CD4-positive, alpha-beta memory T cell (primary cell): ENCODE measurements at regions of chr18 and their contacts with region 1.

Region 1: GRCh38 chr18:3245853-3246634 is 1.6 kb upstream of the MYL12A start:
- DNase-seq: peak; percentile 70 to 81 (median 73)
- H3K4me3 ChIP-seq: peak overlapping the region; percentile 76 to 86
- H3K4me3 Mint-ChIP-seq: peak overlapping the region; percentile 93 to 98 (median 96)
- H3K27ac ChIP-seq: peak overlapping the region; percentile 85
- H3K27ac Mint-ChIP-seq: peak overlapping the region; percentile 80 to 99 (median 96)
- H3K4me1 ChIP-seq: peaks cover 32% of the 10 kb centered on the region
- H3K4me1 Mint-ChIP-seq: peaks cover 19 to 52% (median 30%) of the 10 kb centered on the region in 4 donors
- H3K27me3 ChIP-seq: no peaks in the 10 kb centered on the region
- H3K27me3 Mint-ChIP-seq: no peaks in the 10 kb centered on the region

Region 2: DNA sequence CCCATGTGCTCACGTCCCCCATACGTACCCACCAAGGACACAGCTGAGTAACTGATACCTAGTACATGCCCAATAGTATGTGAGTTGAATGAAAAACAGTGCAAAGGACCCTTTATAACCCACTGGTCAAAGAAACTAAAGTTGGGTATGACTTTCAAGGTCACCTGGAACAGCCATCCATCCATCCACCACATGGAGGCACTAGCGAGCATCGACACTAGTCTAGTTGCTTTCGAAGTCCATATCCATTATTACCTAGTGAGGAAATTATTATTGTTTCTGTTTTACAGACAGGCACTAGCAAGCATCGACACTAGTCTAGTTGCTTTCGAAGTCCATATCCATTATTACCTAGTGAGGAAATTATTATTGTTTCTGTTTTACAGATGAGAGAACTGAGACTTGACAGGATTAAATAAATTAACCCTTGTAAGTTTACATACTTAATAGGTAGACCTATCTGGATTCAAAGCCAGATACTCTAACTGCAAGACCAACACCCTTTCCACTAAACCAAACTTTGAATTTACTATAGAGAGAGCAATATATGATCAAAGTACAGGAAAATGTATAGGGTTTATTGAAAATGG is 908.4 kb before region 1 on chr18:
- CTCF ChIA-PET with region 1: no interaction called
- POLR2A ChIA-PET with region 1: no interaction called
- intact Hi-C with region 1: loop called (anchors 5 kb)
- DNase-seq: peak; percentile 18 to 46 (median 36)
- H3K4me3 ChIP-seq: no peak overlapping the region
- H3K4me3 Mint-ChIP-seq: no peak overlapping the region
- H3K27ac ChIP-seq: no peak overlapping the region
- H3K27ac Mint-ChIP-seq: no peak overlapping the region
- H3K4me1 ChIP-seq: no peaks in the 10 kb centered on the region
- H3K4me1 Mint-ChIP-seq: no peaks in the 10 kb centered on the region
- H3K27me3 ChIP-seq: no peaks in the 10 kb centered on the region
- H3K27me3 Mint-ChIP-seq: peaks cover 11 to 26% of the 10 kb centered on the region in 2 donors

Region 3: GRCh38 chr18:2932247-2933181 is 313.5 kb before region 1 on chr18:
- CTCF ChIA-PET with region 1: interaction called, 14 read pairs
- POLR2A ChIA-PET with region 1: interaction called, 7 read pairs
- intact Hi-C with region 1: loop called (anchors 1 kb)
- DNase-seq: peak; percentile 59 to 79 (median 73)
- H3K4me3 ChIP-seq: no peak overlapping the region
- H3K4me3 Mint-ChIP-seq: peak overlapping the region in 6 of 8 donors; percentile 18 to 64 (median 44)
- H3K27ac ChIP-seq: peak overlapping the region; percentile 56
- H3K27ac Mint-ChIP-seq: peak overlapping the region; percentile 83 to 94 (median 89)
- H3K4me1 ChIP-seq: peaks cover 36% of the 10 kb centered on the region
- H3K4me1 Mint-ChIP-seq: peaks cover 29 to 43% (median 37%) of the 10 kb centered on the region in 4 donors
- H3K27me3 ChIP-seq: no peaks in the 10 kb centered on the region
- H3K27me3 Mint-ChIP-seq: no peaks in the 10 kb centered on the region

Region 4: GRCh38 chr18:2985628-2986027 is 260.4 kb before region 1 on chr18:
- CTCF ChIA-PET with region 1: interaction called, 34 read pairs
- POLR2A ChIA-PET with region 1: interaction called, 20 read pairs
- intact Hi-C with region 1: no loop called
- DNase-seq: peak; percentile 47 to 71 (median 69)
- H3K4me3 ChIP-seq: no peak overlapping the region
- H3K4me3 Mint-ChIP-seq: peak overlapping the region in 1 of 8 donors; percentile 44
- H3K27ac ChIP-seq: no peak overlapping the region
- H3K27ac Mint-ChIP-seq: peak overlapping the region in 4 of 7 donors; percentile 15 to 90 (median 39)
- H3K4me1 ChIP-seq: peaks cover 51% of the 10 kb centered on the region
- H3K4me1 Mint-ChIP-seq: peaks cover 34 to 78% (median 50%) of the 10 kb centered on the region in 4 donors
- H3K27me3 ChIP-seq: no peaks in the 10 kb centered on the region
- H3K27me3 Mint-ChIP-seq: no peaks in the 10 kb centered on the region

Region 5: GRCh38 chr18:3062798-3063680 is 183.0 kb before region 1 on chr18:
- CTCF ChIA-PET with region 1: interaction called, 41 read pairs
- POLR2A ChIA-PET with region 1: interaction called, 114 read pairs
- intact Hi-C with region 1: loop called (anchors 1 kb)
- DNase-seq: peak; percentile 63 to 78 (median 66)
- H3K4me3 ChIP-seq: peak overlapping the region in 1 of 2 donors; percentile 53
- H3K4me3 Mint-ChIP-seq: peak overlapping the region; percentile 70 to 86 (median 81)
- H3K27ac ChIP-seq: peak overlapping the region; percentile 93
- H3K27ac Mint-ChIP-seq: peak overlapping the region; percentile 91 to 100 (median 98)
- H3K4me1 ChIP-seq: peaks cover 67% of the 10 kb centered on the region
- H3K4me1 Mint-ChIP-seq: peaks cover 52 to 72% (median 64%) of the 10 kb centered on the region in 4 donors
- H3K27me3 ChIP-seq: no peaks in the 10 kb centered on the region
- H3K27me3 Mint-ChIP-seq: no peaks in the 10 kb centered on the region

Region 6: GRCh38 chr18:3273042-3273441 is 27.0 kb after region 1 on chr18:
- CTCF ChIA-PET with region 1: no interaction called
- POLR2A ChIA-PET with region 1: interaction called, 13 read pairs
- intact Hi-C with region 1: no loop called
- DNase-seq: no peak
- H3K4me3 ChIP-seq: no peak overlapping the region
- H3K4me3 Mint-ChIP-seq: no peak overlapping the region
- H3K27ac ChIP-seq: no peak overlapping the region
- H3K27ac Mint-ChIP-seq: peak overlapping the region; percentile 32 to 93 (median 72)
- H3K4me1 ChIP-seq: peaks cover 44% of the 10 kb centered on the region
- H3K4me1 Mint-ChIP-seq: peaks cover 37 to 49% (median 45%) of the 10 kb centered on the region in 4 donors
- H3K27me3 ChIP-seq: no peaks in the 10 kb centered on the region
- H3K27me3 Mint-ChIP-seq: no peaks in the 10 kb centered on the region

Region 7: DNA sequence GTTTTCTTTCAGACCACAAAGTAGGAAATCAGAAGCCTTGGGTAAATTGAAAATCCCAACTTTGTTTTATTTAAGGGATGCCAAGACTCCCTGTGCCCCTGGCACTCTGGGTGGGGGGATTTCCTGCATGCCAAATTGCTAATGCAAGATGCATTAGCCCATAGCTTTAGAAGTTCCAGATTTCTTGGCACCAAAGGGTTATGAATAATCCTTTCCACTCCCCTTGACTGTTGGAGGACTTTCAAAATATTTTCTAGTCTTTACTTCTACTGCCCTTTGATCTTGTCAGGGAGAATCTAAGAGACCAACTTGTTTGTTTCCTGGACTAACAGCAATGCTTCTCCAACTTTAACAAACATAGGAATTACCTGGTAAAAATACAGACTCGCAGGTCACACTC is 122.1 kb after region 1 on chr18:
- CTCF ChIA-PET with region 1: no interaction called
- POLR2A ChIA-PET with region 1: no interaction called
- intact Hi-C with region 1: no loop called
- DNase-seq: no peak
- H3K4me3 ChIP-seq: no peak overlapping the region
- H3K4me3 Mint-ChIP-seq: no peak overlapping the region
- H3K27ac ChIP-seq: no peak overlapping the region
- H3K27ac Mint-ChIP-seq: no peak overlapping the region
- H3K4me1 ChIP-seq: no peaks in the 10 kb centered on the region
- H3K4me1 Mint-ChIP-seq: no peaks in the 10 kb centered on the region
- H3K27me3 ChIP-seq: no peaks in the 10 kb centered on the region
- H3K27me3 Mint-ChIP-seq: peaks cover 4 to 9% of the 10 kb centered on the region in 2 donors

Region 8: DNA sequence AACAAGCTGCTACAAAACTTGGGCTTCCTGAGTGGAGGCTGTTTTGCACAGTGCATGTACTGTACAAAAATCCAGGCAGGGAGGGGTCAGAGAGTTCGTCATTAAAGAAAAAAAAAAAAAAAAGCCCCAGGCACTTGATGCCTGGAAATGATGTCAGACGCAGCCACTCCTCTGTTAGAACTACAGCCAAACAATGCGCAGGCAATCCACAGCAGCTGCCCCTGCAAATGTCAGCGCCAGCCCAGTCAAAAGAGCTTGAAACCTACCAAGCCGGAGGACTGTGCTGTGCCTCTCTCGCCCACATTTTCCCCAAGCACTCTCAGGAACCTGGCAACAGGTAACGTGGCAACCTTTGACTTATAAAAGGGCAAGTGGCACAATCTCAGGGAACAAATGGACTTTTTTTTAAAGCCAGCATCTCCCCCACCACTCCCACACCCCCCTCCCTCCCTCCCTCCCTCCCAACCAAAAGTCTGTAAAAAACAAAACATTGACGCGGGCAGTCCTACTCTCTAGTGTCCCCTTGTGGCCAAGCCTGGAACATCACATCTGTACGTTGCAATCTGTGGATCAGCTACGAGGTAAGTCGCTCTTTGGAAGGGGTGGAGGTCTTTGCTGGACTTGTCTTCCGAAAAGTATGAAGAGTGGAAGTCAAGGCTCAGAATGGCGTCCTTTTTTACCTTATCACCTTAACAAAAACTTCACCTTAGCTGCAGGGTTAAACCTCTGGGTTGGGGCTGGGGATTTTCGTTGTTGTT is 348.0 kb after region 1 on chr18:
- CTCF ChIA-PET with region 1: interaction called, 10 read pairs
- POLR2A ChIA-PET with region 1: interaction called, 59 read pairs
- intact Hi-C with region 1: loop called (anchors 1 kb)
- DNase-seq: peak; percentile 93 to 96 (median 95)
- H3K4me3 ChIP-seq: peak overlapping the region; percentile 68 to 72
- H3K4me3 Mint-ChIP-seq: peak overlapping the region; percentile 88 to 95 (median 91)
- H3K27ac ChIP-seq: peak overlapping the region; percentile 91
- H3K27ac Mint-ChIP-seq: peak overlapping the region; percentile 98 to 100 (median 99)
- H3K4me1 ChIP-seq: peaks cover 53% of the 10 kb centered on the region
- H3K4me1 Mint-ChIP-seq: peaks cover 37 to 66% (median 49%) of the 10 kb centered on the region in 4 donors
- H3K27me3 ChIP-seq: no peaks in the 10 kb centered on the region
- H3K27me3 Mint-ChIP-seq: no peaks in the 10 kb centered on the region